ENCODE measurements at regions of chr14 and their contacts with region 1.

Region 1: DNA sequence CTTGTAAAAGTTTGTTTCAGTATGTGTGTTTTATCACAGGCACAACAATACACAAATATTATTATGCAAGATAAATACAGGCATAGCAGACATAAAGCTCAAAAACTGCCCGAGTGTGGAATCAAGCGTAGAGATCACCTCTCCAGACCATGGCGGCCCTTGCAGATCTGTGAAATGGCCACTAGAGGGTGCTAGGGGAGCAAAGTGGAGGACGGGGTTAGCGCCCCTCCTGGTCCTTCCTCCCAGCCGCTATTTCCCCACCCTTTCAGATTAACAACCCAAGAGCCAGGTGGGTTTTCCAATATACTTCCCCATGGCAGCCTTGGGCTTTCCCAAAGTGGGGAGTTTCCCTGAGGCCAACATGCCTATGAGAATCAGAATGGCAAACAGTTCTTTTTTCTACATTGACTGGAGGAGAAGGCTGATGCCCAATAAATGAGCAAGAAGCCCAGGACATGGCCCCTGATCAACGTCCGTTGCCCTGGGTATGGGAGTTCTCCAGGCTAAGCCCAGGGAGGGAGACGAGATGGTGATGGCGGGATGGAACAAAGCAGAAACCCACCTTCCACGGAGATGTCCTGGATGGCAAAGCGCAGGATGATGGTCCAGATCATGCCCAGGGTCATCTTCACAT is 67.4 kb downstream of the ACTN1 start:
- DNase-seq: peak; percentile 52 to 86 (median 80)
- ATAC-seq: peak; percentile 98
- H3K4me3 ChIP-seq: no peak overlapping the region
- H3K4me3 Mint-ChIP-seq: no peak overlapping the region
- H3K27ac ChIP-seq: no peak overlapping the region
- H3K27ac Mint-ChIP-seq: peak overlapping the region; percentile 46
- H3K4me1 ChIP-seq: peaks cover 29% of the 10 kb centered on the region
- H3K4me1 Mint-ChIP-seq: peaks cover 39% of the 10 kb centered on the region
- H3K27me3 ChIP-seq: no peaks in the 10 kb centered on the region
- H3K27me3 Mint-ChIP-seq: no peaks in the 10 kb centered on the region
- CTCF ChIP-seq: peak; percentile 98

Region 2: GRCh38 chr14:68788996-68789820 is 122.5 kb before region 1 on chr14:
- CTCF ChIA-PET with region 1: no interaction called
- POLR2A ChIA-PET with region 1: no interaction called
- intact Hi-C with region 1: no loop called
- DNase-seq: peak; percentile 75 to 94 (median 90)
- ATAC-seq: peak; percentile 36
- H3K4me3 ChIP-seq: peak overlapping the region; percentile 94 to 97
- H3K4me3 Mint-ChIP-seq: peak overlapping the region; percentile 92
- H3K27ac ChIP-seq: peak overlapping the region; percentile 99 to 100
- H3K27ac Mint-ChIP-seq: peak overlapping the region; percentile 100
- H3K4me1 ChIP-seq: peaks cover 53% of the 10 kb centered on the region
- H3K4me1 Mint-ChIP-seq: peaks cover 58% of the 10 kb centered on the region
- H3K27me3 ChIP-seq: no peaks in the 10 kb centered on the region
- H3K27me3 Mint-ChIP-seq: no peaks in the 10 kb centered on the region
- CTCF ChIP-seq: peak; percentile 84

Region 3: GRCh38 chr14:68899033-68899603 is 12.6 kb before region 1 on chr14:
- CTCF ChIA-PET with region 1: interaction called, 16 read pairs
- POLR2A ChIA-PET with region 1: no interaction called
- intact Hi-C with region 1: no loop called
- DNase-seq: peak in 2 of 9 experiments; percentile 36 to 50
- ATAC-seq: peak; percentile 23
- H3K4me3 ChIP-seq: no peak overlapping the region
- H3K4me3 Mint-ChIP-seq: no peak overlapping the region
- H3K27ac ChIP-seq: peak overlapping the region; percentile 28 to 69
- H3K27ac Mint-ChIP-seq: peak overlapping the region; percentile 76
- H3K4me1 ChIP-seq: peaks cover 15% of the 10 kb centered on the region
- H3K4me1 Mint-ChIP-seq: peaks cover 27% of the 10 kb centered on the region
- H3K27me3 ChIP-seq: no peaks in the 10 kb centered on the region
- H3K27me3 Mint-ChIP-seq: no peaks in the 10 kb centered on the region
- CTCF ChIP-seq: no peak

Region 4: GRCh38 chr14:68939893-68940613 is 28.3 kb after region 1 on chr14:
- CTCF ChIA-PET with region 1: interaction called, 12 read pairs
- POLR2A ChIA-PET with region 1: interaction called, 4 read pairs
- intact Hi-C with region 1: loop called in 1 of 2 experiments (anchors 2 kb)
- DNase-seq: peak in 1 of 9 experiments; percentile 44
- ATAC-seq: peak; percentile 43
- H3K4me3 ChIP-seq: no peak overlapping the region
- H3K4me3 Mint-ChIP-seq: peak overlapping the region; percentile 61
- H3K27ac ChIP-seq: peak overlapping the region; percentile 24 to 55
- H3K27ac Mint-ChIP-seq: peak overlapping the region; percentile 88
- H3K4me1 ChIP-seq: peaks cover 97% of the 10 kb centered on the region
- H3K4me1 Mint-ChIP-seq: peaks cover 87% of the 10 kb centered on the region
- H3K27me3 ChIP-seq: no peaks in the 10 kb centered on the region
- H3K27me3 Mint-ChIP-seq: no peaks in the 10 kb centered on the region
- CTCF ChIP-seq: no peak

Region 5: GRCh38 chr14:68979021-68979782 is 67.5 kb after region 1 on chr14 and contains the start of gene ACTN1:
- CTCF ChIA-PET with region 1: interaction called, 22 read pairs
- POLR2A ChIA-PET with region 1: interaction called, 3 read pairs
- intact Hi-C with region 1: loop called (anchors 1 kb)
- DNase-seq: peak; percentile 22 to 87 (median 72)
- ATAC-seq: peak; percentile 52
- H3K4me3 ChIP-seq: peak within 1 kb of the TSS; percentile 79 to 86
- H3K4me3 Mint-ChIP-seq: peak within 1 kb of the TSS; percentile 94
- H3K27ac ChIP-seq: peak within 1 kb of the TSS; percentile 48 to 70
- H3K27ac Mint-ChIP-seq: peak within 1 kb of the TSS; percentile 93
- H3K4me1 ChIP-seq: peaks cover 45% of the 10 kb centered on the region
- H3K4me1 Mint-ChIP-seq: peaks cover 58% of the 10 kb centered on the region
- H3K27me3 ChIP-seq: no peaks in the 10 kb centered on the region
- H3K27me3 Mint-ChIP-seq: no peaks in the 10 kb centered on the region
- CTCF ChIP-seq: no peak
- total RNA-seq, gene ACTN1: 153 to 161 TPM

Region 6: DNA sequence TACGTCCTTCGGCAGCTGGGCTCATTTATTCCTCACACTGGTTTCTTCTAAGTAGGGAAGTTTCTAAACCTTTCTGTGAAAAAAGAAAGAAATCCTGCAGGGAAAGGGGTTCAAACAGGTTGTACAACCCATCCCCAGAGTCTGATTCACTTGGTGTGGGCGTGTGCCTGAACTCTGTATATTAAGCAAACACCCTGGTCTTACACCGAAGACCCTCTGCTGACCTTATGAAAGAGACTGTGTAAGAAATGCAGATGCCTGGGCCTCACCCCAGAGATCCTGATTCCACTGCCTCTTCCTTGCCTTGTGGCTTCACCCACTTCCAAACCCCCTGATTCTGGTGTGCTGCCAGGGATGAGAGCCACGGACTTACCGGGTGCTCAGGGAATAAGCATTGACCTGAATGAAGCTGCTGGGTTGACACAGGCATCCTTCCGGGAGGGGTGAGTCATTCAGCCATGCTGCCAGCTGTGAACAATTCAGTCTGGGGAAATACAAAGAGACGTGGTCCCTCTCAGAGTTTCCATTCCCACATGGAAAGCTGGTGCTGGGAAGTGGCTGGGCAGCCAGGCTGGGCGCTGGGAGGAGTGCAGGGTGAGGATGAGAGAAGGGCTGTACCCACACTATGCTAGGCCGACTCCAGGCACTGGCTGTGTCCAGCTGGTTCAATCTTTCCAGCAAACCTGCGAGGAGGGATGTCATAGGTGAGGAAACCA is 93.9 kb after region 1 on chr14:
- CTCF ChIA-PET with region 1: interaction called, 74 read pairs
- POLR2A ChIA-PET with region 1: no interaction called
- intact Hi-C with region 1: loop called (anchors 1 kb)
- DNase-seq: no peak
- ATAC-seq: no peak
- H3K4me3 ChIP-seq: no peak overlapping the region
- H3K4me3 Mint-ChIP-seq: no peak overlapping the region
- H3K27ac ChIP-seq: no peak overlapping the region
- H3K27ac Mint-ChIP-seq: no peak overlapping the region
- H3K4me1 ChIP-seq: peaks cover 2% of the 10 kb centered on the region
- H3K4me1 Mint-ChIP-seq: peaks cover 3% of the 10 kb centered on the region
- H3K27me3 ChIP-seq: no peaks in the 10 kb centered on the region
- H3K27me3 Mint-ChIP-seq: no peaks in the 10 kb centered on the region
- CTCF ChIP-seq: no peak

Region 7: DNA sequence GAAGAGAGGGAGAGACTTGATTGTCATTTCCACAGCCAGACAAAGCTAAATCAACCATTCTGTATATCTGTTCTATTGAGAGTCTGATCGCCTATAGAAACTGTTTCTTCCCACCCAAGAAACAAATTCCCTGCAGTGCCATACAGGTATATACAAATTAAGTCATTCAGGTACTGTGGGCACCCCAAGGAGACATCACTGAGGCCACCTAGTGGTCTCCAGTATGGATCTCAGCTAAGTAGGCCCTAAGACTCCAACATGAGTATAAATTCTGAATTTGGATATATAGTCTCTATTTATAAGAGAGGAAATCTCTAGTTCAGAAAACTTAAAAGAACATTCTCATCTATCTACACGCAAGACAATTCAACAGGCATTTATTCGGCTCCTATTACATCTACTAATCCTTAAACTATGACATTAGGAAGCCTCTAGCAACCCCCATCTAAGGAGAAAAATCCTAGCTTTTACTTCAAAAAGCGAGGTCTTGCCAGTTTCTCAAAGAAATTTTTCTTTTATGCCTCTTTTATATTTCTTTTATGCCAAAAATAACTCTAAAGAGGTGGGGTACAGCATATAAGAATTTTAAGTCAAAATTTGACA is 178.6 kb after region 1 on chr14:
- CTCF ChIA-PET with region 1: interaction called, 56 read pairs
- POLR2A ChIA-PET with region 1: interaction called, 3 read pairs
- intact Hi-C with region 1: loop called (anchors 1 kb)
- DNase-seq: peak in 7 of 9 experiments; percentile 10 to 60 (median 37)
- ATAC-seq: peak; percentile 71
- H3K4me3 ChIP-seq: no peak overlapping the region
- H3K4me3 Mint-ChIP-seq: no peak overlapping the region
- H3K27ac ChIP-seq: no peak overlapping the region
- H3K27ac Mint-ChIP-seq: peak overlapping the region; percentile 22
- H3K4me1 ChIP-seq: no peaks in the 10 kb centered on the region
- H3K4me1 Mint-ChIP-seq: peaks cover 16% of the 10 kb centered on the region
- H3K27me3 ChIP-seq: no peaks in the 10 kb centered on the region
- H3K27me3 Mint-ChIP-seq: no peaks in the 10 kb centered on the region
- CTCF ChIP-seq: peak; percentile 56

Region 8: GRCh38 chr14:70567791-70568190 is 1656.1 kb after region 1 on chr14:
- CTCF ChIA-PET with region 1: no interaction called
- POLR2A ChIA-PET with region 1: no interaction called
- intact Hi-C with region 1: no loop called
- DNase-seq: peak in 2 of 9 experiments; percentile 7 to 13
- ATAC-seq: no peak
- H3K4me3 ChIP-seq: no peak overlapping the region
- H3K4me3 Mint-ChIP-seq: no peak overlapping the region
- H3K27ac ChIP-seq: no peak overlapping the region
- H3K27ac Mint-ChIP-seq: no peak overlapping the region
- H3K4me1 ChIP-seq: no peaks in the 10 kb centered on the region
- H3K4me1 Mint-ChIP-seq: peaks cover 30% of the 10 kb centered on the region
- H3K27me3 ChIP-seq: no peaks in the 10 kb centered on the region
- H3K27me3 Mint-ChIP-seq: no peaks in the 10 kb centered on the region
- CTCF ChIP-seq: no peak